Right lobe of liver (tissue), 6 donors: ENCODE measurements at regions of chr5 and their contacts with region 1.

Region 1: DNA sequence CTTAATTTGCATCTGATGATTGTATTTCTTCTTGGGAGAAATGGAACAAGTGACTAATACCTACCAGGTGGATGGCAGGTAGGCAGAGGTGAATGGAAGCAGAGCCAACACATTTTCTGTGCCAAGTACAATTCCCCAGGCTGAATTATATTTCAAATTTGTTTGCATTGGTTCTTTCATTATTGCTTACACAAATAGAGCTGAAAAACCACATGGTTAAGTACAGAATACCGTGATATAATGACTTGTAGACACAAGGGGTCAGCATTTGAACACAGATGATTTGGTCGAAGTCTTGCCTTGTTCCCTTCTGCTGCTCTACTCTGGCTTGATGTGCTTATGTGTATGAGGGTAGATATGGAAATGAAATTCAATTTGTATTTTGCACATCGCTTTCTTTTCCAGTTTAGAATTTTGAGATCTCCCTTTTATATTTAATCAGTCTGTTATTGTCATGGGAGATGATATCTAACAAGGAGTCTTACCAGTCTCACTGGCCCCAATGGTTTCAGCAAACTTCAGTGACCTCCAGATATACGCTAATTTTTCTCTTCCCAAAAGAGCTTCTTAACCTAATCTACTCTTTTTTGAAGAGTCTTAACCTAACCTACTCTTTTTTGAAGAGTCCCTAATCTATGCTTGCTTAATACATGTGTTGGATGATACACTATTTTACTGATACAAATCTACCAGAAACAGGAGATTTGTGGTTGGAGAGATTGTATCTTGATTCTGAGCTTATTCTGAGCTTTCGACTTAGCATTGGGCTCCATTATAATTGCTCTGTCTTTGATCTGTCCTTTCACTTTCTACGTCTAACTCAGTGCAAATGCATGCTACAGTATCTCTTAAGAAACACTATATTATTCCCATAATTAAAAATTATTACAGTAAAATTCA is 88.1 kb downstream of the PCSK1 start:
- DNase-seq: no peak
- ATAC-seq: peak; percentile 77 to 92 (median 83)
- H3K4me3 ChIP-seq: no peak overlapping the region
- H3K27ac ChIP-seq: no peak overlapping the region
- H3K4me1 ChIP-seq: peaks cover 0 to 18% (median 6%) of the 10 kb centered on the region in 4 donors
- H3K27me3 ChIP-seq: no peaks in the 10 kb centered on the region
- CTCF ChIP-seq: peak; percentile 56 to 77 (median 66)
- POLR2A ChIP-seq: no peak

Region 2: GRCh38 chr5:96595300-96596090 is 250.6 kb after region 1 on chr5:
- intact Hi-C with region 1: loop called (anchors 5 kb)
- DNase-seq: no peak
- ATAC-seq: peak in 1 of 4 donors; percentile 17
- H3K4me3 ChIP-seq: no peak overlapping the region
- H3K27ac ChIP-seq: no peak overlapping the region
- H3K4me1 ChIP-seq: no peaks in the 10 kb centered on the region
- H3K27me3 ChIP-seq: no peaks in the 10 kb centered on the region
- CTCF ChIP-seq: peak; percentile 26 to 42 (median 34)
- POLR2A ChIP-seq: no peak

Region 3: GRCh38 chr5:96601811-96602244 is 256.9 kb after region 1 on chr5:
- intact Hi-C with region 1: loop called (anchors 5 kb)
- DNase-seq: peak in 1 of 3 donors; percentile 55
- ATAC-seq: peak; percentile 92 to 98 (median 94)
- H3K4me3 ChIP-seq: no peak overlapping the region
- H3K27ac ChIP-seq: no peak overlapping the region
- H3K4me1 ChIP-seq: no peaks in the 10 kb centered on the region
- H3K27me3 ChIP-seq: no peaks in the 10 kb centered on the region
- CTCF ChIP-seq: peak; percentile 74 to 86 (median 78)
- POLR2A ChIP-seq: no peak